Natural killer cell (primary cell): ENCODE measurements at regions of chr20 and their contacts with region 1.

Region 1: DNA sequence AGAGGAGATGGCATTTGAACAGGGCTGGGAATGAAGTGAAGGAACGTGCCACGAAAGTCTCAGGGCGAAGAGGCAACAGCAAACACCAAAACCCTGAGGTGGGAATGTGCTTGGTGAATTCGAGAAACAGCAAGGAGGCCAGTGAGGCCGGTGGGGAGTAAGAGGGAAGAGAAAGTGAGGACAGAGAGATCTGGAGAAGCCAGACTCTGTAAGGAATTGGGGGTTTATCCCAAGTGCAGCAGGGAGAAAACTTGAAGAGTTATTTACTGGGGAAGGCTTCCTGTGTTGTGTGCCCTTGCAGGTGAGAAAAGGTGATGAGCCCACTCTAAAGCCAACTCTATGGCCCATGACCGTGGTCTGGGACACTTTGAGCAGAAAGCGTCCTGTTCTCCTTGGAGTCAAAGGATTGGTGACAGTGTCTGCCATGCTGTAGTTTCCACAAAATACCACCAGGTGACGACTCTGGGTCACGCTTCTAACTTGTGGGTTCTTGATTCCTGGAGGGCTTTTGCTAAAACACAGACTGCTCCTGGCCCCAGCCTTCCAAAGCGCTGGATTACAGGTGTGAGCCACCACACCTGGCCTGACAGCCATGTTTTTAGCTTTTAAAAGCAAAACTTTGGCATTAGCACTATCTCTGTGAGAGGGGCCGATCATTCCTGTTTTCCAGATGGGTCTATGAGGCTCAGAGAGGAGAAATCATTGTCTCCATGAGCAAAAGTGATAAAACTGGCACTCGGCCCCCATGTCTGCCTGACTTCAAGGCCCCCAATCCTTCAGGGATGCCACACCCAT is 18.0 kb upstream of the CSNK2A1 start:
- DNase-seq: peak in 1 of 2 donors; percentile 61
- ATAC-seq: peak; percentile 64 to 79 (median 73)
- H3K4me3 ChIP-seq: no peak overlapping the region
- H3K4me3 Mint-ChIP-seq: no peak overlapping the region
- H3K27ac ChIP-seq: no peak overlapping the region
- H3K27ac Mint-ChIP-seq: no peak overlapping the region
- H3K4me1 ChIP-seq: no peaks in the 10 kb centered on the region
- H3K4me1 Mint-ChIP-seq: no peaks in the 10 kb centered on the region
- H3K27me3 ChIP-seq: no peaks in the 10 kb centered on the region
- H3K27me3 Mint-ChIP-seq: peaks cover 12 to 17% of the 10 kb centered on the region in 2 donors
- CTCF ChIP-seq: peak; percentile 72

Region 2: DNA sequence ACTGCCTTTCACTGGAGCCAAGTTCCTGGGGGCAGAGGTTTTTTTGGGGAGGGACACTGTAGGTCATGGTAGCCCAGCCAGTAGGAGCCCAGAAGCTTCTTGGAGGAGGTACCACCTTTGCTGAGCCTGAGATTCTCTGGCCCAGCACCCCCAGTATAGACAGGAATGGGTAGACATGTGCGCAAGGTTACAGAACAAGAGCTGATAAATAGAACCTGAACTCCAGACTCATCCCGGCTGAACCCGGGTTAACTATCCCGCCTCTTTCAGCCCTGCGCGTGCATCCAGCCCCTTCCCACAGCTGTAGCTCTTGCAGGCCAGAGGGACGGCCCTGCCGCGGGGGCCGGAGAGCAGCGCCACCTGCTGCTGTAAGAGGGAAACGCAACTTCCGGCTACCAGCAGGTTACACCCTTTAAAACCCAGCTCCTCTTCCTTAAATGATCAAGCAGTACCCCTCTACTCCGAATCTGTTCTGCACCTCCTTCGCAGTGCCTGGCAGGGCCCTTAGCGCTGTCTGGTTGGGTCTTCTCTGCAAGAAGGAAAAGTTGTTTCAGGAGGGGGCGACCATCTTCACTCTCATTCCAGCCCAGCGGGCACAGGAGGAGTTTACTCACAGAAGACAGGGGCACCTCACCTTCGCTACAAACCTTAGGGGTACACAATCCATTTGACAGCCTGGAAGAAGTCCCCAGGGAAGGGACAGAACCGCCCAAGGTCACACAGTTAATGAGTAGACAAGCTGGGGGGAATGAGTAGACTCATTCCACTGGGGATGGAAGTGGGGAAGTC is 83.9 kb after region 1 on chr20:
- intact Hi-C with region 1: loop called (anchors 1 kb)
- DNase-seq: peak; percentile 70 to 80
- ATAC-seq: peak; percentile 82 to 89 (median 87)
- H3K4me3 ChIP-seq: no peak overlapping the region
- H3K4me3 Mint-ChIP-seq: no peak overlapping the region
- H3K27ac ChIP-seq: no peak overlapping the region
- H3K27ac Mint-ChIP-seq: no peak overlapping the region
- H3K4me1 ChIP-seq: peaks cover 13% of the 10 kb centered on the region
- H3K4me1 Mint-ChIP-seq: peaks cover 8 to 20% of the 10 kb centered on the region in 2 donors
- H3K27me3 ChIP-seq: peaks cover 5% of the 10 kb centered on the region
- H3K27me3 Mint-ChIP-seq: no peaks in the 10 kb centered on the region
- CTCF ChIP-seq: peak; percentile 99

Region 3: DNA sequence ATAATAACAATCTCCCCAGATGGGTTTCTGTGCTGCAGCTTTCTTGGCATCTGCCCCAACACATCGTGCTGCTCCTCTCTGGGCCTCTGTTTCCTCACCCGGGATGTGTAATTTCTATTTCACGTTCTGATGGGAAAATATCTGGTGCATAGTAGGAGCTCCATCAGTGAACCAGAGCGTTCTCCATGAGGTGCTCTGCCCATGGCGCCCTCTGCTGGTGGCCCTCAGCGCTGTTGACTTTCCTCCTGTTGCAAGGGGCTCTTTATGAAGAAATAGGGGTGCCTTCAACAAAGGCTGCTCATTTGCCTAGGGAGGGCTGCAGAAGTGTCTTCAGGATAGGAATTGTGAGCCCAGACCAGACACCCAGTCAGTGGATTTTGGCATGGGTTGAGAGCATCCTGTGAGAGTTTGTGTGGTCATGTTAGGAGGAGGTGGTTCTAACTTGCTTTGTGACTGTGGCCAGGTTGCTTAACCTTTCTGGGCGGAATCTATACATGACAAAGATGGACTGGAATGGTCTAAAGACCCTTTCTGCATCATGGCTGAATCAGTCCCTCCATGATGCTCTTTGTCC is 105.8 kb after region 1 on chr20:
- intact Hi-C with region 1: loop called (anchors 5 kb)
- DNase-seq: peak; percentile 65 to 70
- ATAC-seq: peak; percentile 53 to 63 (median 53)
- H3K4me3 ChIP-seq: no peak overlapping the region
- H3K4me3 Mint-ChIP-seq: no peak overlapping the region
- H3K27ac ChIP-seq: no peak overlapping the region
- H3K27ac Mint-ChIP-seq: no peak overlapping the region
- H3K4me1 ChIP-seq: no peaks in the 10 kb centered on the region
- H3K4me1 Mint-ChIP-seq: peaks cover 0 to 20% of the 10 kb centered on the region in 2 donors
- H3K27me3 ChIP-seq: peaks cover 18% of the 10 kb centered on the region
- H3K27me3 Mint-ChIP-seq: peaks cover 33 to 39% of the 10 kb centered on the region in 2 donors
- CTCF ChIP-seq: peak; percentile 71

Region 4: GRCh38 chr20:736897-737296 is 175.3 kb after region 1 on chr20:
- intact Hi-C with region 1: loop called (anchors 5 kb)
- DNase-seq: no peak
- ATAC-seq: no peak
- H3K4me3 ChIP-seq: no peak overlapping the region
- H3K4me3 Mint-ChIP-seq: no peak overlapping the region
- H3K27ac ChIP-seq: no peak overlapping the region
- H3K27ac Mint-ChIP-seq: no peak overlapping the region
- H3K4me1 ChIP-seq: no peaks in the 10 kb centered on the region
- H3K4me1 Mint-ChIP-seq: no peaks in the 10 kb centered on the region
- H3K27me3 ChIP-seq: no peaks in the 10 kb centered on the region
- H3K27me3 Mint-ChIP-seq: peaks cover 3 to 13% of the 10 kb centered on the region in 2 donors
- CTCF ChIP-seq: no peak